Sigmoid colon (tissue), 7 donors: ENCODE measurements at regions of chr6 and their contacts with region 1.

Region 1: DNA sequence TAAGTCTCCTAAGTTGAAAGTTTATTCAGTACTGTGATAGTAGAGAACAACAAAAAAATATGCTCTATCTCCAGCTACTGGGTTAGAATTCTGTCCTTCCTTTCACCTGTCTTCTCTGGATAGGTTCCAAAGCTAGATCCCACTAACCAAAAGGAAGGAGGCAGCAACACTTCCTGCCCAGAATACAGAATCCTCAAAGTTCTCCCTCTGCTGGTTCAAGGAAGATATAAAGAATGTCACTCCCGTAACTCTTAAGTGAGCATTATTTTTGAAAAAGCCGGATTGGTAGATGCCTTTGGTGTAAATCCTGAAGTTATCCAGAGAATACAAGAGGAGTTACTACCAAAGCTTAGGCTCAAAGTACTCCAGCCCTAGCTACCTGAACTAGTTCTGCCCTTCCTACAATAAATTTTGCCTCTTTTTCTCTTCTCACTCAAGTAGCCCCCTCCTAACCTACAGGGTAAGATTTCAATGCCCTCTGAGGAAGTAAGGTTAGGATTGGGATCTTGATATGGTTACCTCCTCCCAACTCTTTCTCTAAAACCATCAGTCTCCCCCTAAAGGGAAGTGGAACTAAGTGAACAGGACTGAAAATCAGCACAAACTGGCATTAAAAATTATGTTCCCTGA is 26.0 kb upstream of the CRIP3 start:
- DNase-seq: no peak
- H3K4me3 ChIP-seq: no peak overlapping the region
- H3K27ac ChIP-seq: no peak overlapping the region
- H3K4me1 ChIP-seq: peaks cover 0 to 6% (median 0%) of the 10 kb centered on the region in 4 donors
- H3K27me3 ChIP-seq: no peaks in the 10 kb centered on the region
- CTCF ChIP-seq: peak; percentile 42 to 59 (median 51)
- EP300 ChIP-seq: no peak
- POLR2A ChIP-seq: no peak

Region 2: GRCh38 chr6:43263314-43264178 is 71.0 kb before region 1 on chr6:
- intact Hi-C with region 1: loop called (anchors 2 kb)
- DNase-seq: peak; percentile 82
- H3K4me3 ChIP-seq: no peak overlapping the region
- H3K27ac ChIP-seq: no peak overlapping the region
- H3K4me1 ChIP-seq: peaks cover 0 to 11% (median 9%) of the 10 kb centered on the region in 4 donors
- H3K27me3 ChIP-seq: no peaks in the 10 kb centered on the region
- CTCF ChIP-seq: peak; percentile 53 to 76 (median 68)
- EP300 ChIP-seq: no peak
- POLR2A ChIP-seq: no peak

Region 3: GRCh38 chr6:43593938-43594337 is 259.4 kb after region 1 on chr6:
- intact Hi-C with region 1: no loop called
- DNase-seq: no peak
- H3K4me3 ChIP-seq: no peak overlapping the region
- H3K27ac ChIP-seq: no peak overlapping the region
- H3K4me1 ChIP-seq: no peaks in the 10 kb centered on the region
- H3K27me3 ChIP-seq: no peaks in the 10 kb centered on the region
- CTCF ChIP-seq: no peak
- EP300 ChIP-seq: no peak
- POLR2A ChIP-seq: no peak